HCT116 (cell line): ENCODE measurements at regions of chr17 and their contacts with region 1.

Region 1: DNA sequence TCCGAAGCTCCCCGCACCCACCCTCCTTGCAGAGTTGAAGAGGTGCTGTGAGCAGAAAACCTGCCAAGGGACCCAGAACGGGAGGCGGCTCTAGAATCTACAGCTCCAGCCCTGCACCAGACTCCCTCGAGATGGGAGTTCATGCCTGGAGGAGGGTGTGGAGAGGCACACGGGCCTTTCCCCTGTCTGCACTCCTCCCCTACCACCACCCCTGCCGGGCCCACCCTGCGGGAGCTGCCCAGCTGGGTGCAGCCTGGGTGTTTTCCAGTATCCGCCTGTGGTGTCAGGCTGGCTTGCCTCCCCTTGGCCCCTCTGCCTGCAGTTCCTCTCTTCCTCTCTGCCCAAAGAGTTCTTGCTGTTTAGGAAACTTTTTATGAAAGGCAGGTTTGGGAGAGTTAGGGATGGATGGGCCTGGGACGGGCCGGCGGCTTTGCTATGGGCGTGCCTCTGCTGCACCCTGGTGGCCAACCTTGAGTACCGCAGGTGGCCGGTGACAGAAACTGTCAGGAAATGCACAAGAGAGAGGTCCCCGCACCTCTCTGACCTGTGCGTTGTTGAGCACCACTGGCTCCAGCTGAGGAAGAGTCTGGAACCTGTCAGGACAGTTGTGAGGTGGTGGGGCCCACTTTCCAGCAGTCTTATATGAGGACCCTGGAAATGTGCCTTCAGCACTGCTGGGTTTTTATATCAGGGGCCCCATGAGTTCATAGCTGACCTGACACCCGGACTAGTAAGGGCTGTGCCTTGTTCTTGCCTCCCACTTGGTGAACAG is 354.1 kb downstream of the SEC14L1 start:
- DNase-seq: peak; percentile 45
- ATAC-seq: peak; percentile 87
- H3K4me3 ChIP-seq: no peak overlapping the region
- H3K27ac ChIP-seq: no peak overlapping the region; the same call in 1 of the 2 replicates
- H3K4me1 ChIP-seq: no peaks in the 10 kb centered on the region
- H3K27me3 ChIP-seq: no peaks in the 10 kb centered on the region
- CTCF ChIP-seq: peak; percentile 91 to 100 (median 99)
- POLR2A ChIP-seq: no peak
- RAD21 ChIP-seq: peak; percentile 99

Region 2: GRCh38 chr17:77186141-77186604 is 308.7 kb before region 1 on chr17:
- CTCF ChIA-PET with region 1: no interaction called
- POLR2A ChIA-PET with region 1: no interaction called
- RAD21 ChIA-PET with region 1: no interaction called
- intact Hi-C with region 1: no loop called
- DNase-seq: no peak
- ATAC-seq: no peak
- H3K4me3 ChIP-seq: no peak overlapping the region
- H3K27ac ChIP-seq: no peak overlapping the region
- H3K4me1 ChIP-seq: peaks cover 0 to 8% of the 10 kb centered on the region in 2 experiments; a peak in 1 of 4 replicates
- H3K27me3 ChIP-seq: no peaks in the 10 kb centered on the region
- CTCF ChIP-seq: no peak
- POLR2A ChIP-seq: no peak
- RAD21 ChIP-seq: no peak

Region 3: DNA sequence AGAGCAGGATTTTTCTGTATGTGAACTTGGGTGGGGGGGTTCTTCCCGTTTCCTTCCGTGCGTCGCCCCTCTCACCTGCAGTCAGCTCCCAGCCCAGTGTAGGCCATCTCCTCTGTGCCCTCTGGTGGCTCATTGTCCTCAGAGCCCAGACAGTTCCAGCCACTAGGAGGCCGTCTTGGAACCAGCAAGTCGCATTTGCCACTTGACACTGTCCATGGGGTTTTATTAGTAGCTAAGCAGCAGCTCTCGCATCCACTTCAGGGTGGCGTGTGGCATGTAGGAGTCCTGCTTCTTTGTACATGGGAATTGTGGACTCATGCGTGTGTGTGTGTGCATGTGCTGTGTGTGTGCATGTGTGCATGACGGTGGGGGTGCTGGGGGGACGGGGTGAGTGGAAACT is 280.1 kb before region 1 on chr17:
- CTCF ChIA-PET with region 1: no interaction called
- POLR2A ChIA-PET with region 1: no interaction called
- RAD21 ChIA-PET with region 1: no interaction called
- intact Hi-C with region 1: loop called (anchors 1 kb)
- DNase-seq: peak; percentile 56
- ATAC-seq: peak; percentile 98
- H3K4me3 ChIP-seq: no peak overlapping the region
- H3K27ac ChIP-seq: no peak overlapping the region
- H3K4me1 ChIP-seq: no peaks in the 10 kb centered on the region
- H3K27me3 ChIP-seq: no peaks in the 10 kb centered on the region
- CTCF ChIP-seq: peak; percentile 90 to 99 (median 92)
- POLR2A ChIP-seq: no peak
- RAD21 ChIP-seq: peak; percentile 79

Region 4: DNA sequence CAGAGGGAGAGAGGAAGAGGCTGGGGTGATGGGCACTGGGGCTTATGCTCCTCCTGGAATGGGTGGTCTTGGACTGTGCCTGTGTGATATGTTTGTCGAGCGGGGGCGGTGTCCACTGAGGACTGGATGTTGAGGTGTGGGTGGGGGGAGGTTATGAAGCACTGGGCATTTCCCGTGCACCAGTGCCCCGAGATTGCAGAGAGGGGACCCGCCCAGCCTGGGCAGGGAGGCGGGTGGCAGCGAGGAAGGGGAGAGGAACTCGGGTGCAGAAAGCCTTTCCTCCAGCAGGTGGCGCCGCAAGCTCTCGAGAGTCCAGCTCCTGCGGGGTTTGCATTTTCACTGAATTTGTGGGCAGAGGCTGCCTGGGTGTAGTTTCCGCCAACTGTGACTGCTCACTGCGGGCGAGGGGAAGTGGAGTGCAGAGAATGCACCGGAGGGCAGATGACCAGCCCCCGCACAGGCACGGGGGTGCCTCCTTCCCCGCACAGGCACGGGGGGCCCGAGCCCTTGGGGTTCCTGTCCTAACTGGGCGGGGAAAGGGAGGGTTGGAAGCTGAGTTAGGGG is 163.5 kb before region 1 on chr17:
- CTCF ChIA-PET with region 1: interaction called, 18 read pairs
- POLR2A ChIA-PET with region 1: no interaction called
- RAD21 ChIA-PET with region 1: interaction called in 1 of 2 experiments, 4 read pairs
- intact Hi-C with region 1: loop called (anchors 1 kb)
- DNase-seq: peak; percentile 58
- ATAC-seq: peak; percentile 91
- H3K4me3 ChIP-seq: no peak overlapping the region
- H3K27ac ChIP-seq: no peak overlapping the region
- H3K4me1 ChIP-seq: peaks cover 23 to 41% of the 10 kb centered on the region in 2 experiments
- H3K27me3 ChIP-seq: no peaks in the 10 kb centered on the region
- CTCF ChIP-seq: peak; percentile 86 to 99 (median 96); a peak in 5 of 6 replicates
- POLR2A ChIP-seq: no peak
- RAD21 ChIP-seq: peak; percentile 99

Region 5: GRCh38 chr17:77429919-77430752 is 64.7 kb before region 1 on chr17:
- CTCF ChIA-PET with region 1: interaction called, 22 read pairs
- POLR2A ChIA-PET with region 1: no interaction called
- RAD21 ChIA-PET with region 1: interaction called, 3 to 8 read pairs
- intact Hi-C with region 1: loop called (anchors 2 kb)
- DNase-seq: peak; percentile 48
- ATAC-seq: peak; percentile 80
- H3K4me3 ChIP-seq: no peak overlapping the region
- H3K27ac ChIP-seq: no peak overlapping the region
- H3K4me1 ChIP-seq: peaks cover 0 to 43% of the 10 kb centered on the region in 2 experiments; a peak in 2 of 4 replicates
- H3K27me3 ChIP-seq: no peaks in the 10 kb centered on the region
- CTCF ChIP-seq: peak; percentile 69 to 94 (median 92); a peak in 5 of 6 replicates
- POLR2A ChIP-seq: no peak
- RAD21 ChIP-seq: peak; percentile 79

Region 6: GRCh38 chr17:77542551-77543490 is 48.0 kb after region 1 on chr17:
- CTCF ChIA-PET with region 1: no interaction called
- POLR2A ChIA-PET with region 1: no interaction called
- RAD21 ChIA-PET with region 1: no interaction called
- intact Hi-C with region 1: no loop called
- DNase-seq: peak; percentile 79
- ATAC-seq: peak; percentile 98
- H3K4me3 ChIP-seq: no peak overlapping the region
- H3K27ac ChIP-seq: no peak overlapping the region
- H3K4me1 ChIP-seq: peaks cover 0 to 8% of the 10 kb centered on the region in 2 experiments; a peak in 3 of 4 replicates
- H3K27me3 ChIP-seq: peaks cover 22% of the 10 kb centered on the region; the same call in 1 of the 2 replicates
- CTCF ChIP-seq: peak; percentile 92 to 99 (median 99)
- POLR2A ChIP-seq: no peak
- RAD21 ChIP-seq: peak; percentile 98